ENCODE measurements at regions of chrX and their contacts with region 1.

Region 1: GRCh38 chrX:12052109-12052508 is 86.2 kb upstream of the FRMPD4 start:
- DNase-seq: no peak
- ATAC-seq: peak; percentile 22; the same call in 1 of the 2 replicates
- H3K4me3 ChIP-seq: no peak overlapping the region
- H3K27ac ChIP-seq: no peak overlapping the region
- H3K4me1 ChIP-seq: peaks cover 3% of the 10 kb centered on the region; the same call in 1 of the 2 replicates
- H3K27me3 ChIP-seq: no peaks in the 10 kb centered on the region
- CTCF ChIP-seq: no peak

Region 2: GRCh38 chrX:12013220-12013619 is 38.9 kb before region 1 on chrX:
- CTCF ChIA-PET with region 1: no interaction called
- POLR2A ChIA-PET with region 1: no interaction called
- intact Hi-C with region 1: loop called (anchors 5 kb)
- DNase-seq: peak; percentile 83
- ATAC-seq: peak; percentile 92
- H3K4me3 ChIP-seq: no peak overlapping the region
- H3K27ac ChIP-seq: peak overlapping the region; percentile 35; the same call in 1 of the 2 replicates
- H3K4me1 ChIP-seq: peaks cover 38% of the 10 kb centered on the region
- H3K27me3 ChIP-seq: no peaks in the 10 kb centered on the region
- CTCF ChIP-seq: no peak